Colonic mucosa (tissue), 4 donors: ENCODE measurements at regions of chr4 and their contacts with region 1.

Region 1: DNA sequence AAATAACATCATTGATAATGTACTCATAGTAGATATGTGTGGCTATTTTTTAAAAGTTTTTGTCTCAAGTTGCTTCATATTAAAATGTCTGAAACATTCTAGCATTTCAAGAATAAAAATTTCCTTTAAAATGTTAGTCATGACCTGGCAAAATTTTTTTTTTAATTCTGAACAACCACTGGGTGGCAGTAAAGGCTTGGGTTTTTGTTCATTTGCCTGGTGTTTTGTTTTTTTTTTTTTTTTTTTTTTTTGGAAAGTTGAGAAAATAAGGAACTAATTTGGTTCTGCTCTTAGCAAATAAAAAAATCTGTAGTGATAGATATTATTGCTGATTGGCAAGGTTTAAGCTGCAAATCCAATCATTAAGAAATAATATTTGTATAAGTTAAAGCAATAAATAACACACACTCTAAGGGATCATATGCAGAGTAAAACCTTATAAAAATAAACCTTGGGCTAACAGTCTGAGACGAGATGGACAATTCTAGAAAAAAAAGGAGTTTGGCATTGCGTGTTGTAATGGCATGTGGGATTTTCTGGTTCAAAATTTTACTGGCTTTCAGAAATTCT is 81.4 kb downstream of the CEP44 start:
- DNase-seq: no peak
- H3K4me3 ChIP-seq: no peak overlapping the region
- H3K27ac ChIP-seq: no peak overlapping the region
- H3K4me1 ChIP-seq: no peaks in the 10 kb centered on the region
- H3K27me3 ChIP-seq: no peaks in the 10 kb centered on the region
- CTCF ChIP-seq: no peak

Region 2: DNA sequence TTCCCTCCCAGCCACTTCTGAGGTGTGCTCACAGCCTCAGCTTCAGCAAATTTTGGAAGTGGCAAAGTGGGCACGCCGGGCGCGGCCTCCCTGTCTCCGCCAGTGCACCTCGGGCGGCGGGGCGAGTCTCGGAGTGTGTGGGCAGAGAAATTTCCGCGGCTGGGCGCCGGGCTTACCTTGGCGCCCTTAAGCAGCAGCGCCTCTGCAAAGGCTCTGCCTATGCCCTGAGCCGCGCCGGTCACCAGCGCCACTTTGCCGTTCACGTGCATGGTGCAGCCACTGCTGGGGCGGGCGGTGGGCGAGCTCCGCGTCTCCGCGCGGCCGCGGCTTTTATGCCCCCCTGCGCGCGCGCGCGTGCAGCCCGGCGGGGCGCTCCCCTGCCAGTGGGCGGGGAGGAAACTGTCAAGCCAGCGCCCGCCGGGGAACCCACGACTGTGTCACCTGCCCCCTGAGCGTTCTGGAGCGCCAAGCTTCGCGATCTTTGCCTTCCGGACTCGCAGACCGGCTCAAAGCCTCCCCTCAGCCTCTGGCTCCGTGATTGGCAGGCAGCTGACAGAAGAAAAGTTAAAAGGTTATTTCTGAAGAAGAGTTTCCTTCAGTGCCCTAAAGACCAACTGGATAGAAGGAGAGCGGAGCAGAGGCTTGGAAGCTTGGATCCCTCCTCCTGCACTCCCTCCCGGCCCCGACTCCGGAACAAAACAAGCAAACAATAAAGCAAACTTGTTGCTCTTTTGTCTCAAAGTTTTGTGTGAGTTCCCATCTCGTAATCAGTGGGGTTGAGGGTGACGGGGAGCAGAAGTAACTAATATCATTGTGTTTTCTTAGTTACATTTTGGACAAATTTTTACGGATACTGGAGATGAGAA is 157.3 kb after region 1 on chr4 and contains the start of gene HPGD:
- intact Hi-C with region 1: loop called (anchors 10 kb)
- DNase-seq: peak; percentile 78
- H3K4me3 ChIP-seq: peak within 1 kb of the TSS; percentile 73
- H3K27ac ChIP-seq: peak within 1 kb of the TSS; percentile 88
- H3K4me1 ChIP-seq: no peaks in the 10 kb centered on the region
- H3K27me3 ChIP-seq: no peaks in the 10 kb centered on the region
- CTCF ChIP-seq: no peak
- total RNA-seq, gene HPGD: 62.3 to 159 TPM

Region 3: DNA sequence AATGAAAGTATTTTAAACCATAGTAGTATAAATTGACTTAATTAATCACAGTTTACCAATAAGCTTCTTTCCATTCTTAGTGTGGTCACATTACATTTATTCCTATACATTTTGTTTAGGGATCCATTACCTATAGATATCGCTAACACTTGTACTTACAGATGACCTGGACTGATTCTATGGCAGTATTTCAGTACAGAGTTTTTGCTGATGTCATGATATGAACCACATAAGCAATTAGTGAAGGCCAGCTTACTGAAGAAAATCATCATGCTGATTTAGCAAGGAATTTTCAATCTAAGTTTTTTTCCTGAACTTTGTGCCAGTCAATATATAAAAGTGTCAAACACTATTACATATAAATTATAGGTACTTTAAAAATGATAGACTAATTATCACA is 270.6 kb after region 1 on chr4:
- intact Hi-C with region 1: loop called (anchors 2 kb)
- DNase-seq: no peak
- H3K4me3 ChIP-seq: no peak overlapping the region
- H3K27ac ChIP-seq: no peak overlapping the region
- H3K4me1 ChIP-seq: no peaks in the 10 kb centered on the region
- H3K27me3 ChIP-seq: no peaks in the 10 kb centered on the region
- CTCF ChIP-seq: no peak

Region 4: DNA sequence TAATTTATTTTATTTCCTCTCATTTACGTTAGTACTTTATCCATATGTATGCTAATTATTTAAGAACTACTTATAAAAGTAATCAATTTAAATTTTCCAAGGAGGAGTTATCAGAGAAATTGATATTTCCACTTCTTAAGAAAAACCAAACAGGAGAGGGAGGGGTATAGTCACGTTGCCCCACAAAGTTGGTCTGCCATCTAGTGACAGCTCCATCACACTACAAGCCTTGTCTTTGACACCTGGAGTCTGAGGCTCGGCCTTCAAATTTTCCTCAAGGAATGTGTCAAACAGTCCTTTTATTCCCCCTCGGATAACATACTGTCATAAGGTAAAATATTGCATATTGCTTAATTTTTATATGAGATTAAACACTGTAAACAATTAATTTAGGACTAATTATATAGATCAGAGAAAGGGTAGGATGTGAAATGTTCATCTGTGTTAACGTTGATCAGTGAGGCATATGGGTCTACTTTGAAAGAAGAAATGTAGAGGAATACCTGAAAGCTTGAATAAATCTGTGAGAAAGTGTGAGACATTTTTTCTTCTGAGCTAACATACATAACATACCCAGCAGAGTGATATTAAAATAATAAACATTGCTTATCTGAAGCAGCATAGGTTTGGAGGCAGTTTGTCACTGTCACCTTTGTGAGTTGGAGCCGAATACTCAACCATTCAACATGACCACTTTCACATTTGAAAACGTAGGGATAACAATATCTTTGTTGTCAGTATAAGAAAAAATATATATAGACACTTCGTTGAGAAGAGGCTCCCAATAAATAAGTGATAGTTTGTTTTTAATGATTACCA is 349.5 kb after region 1 on chr4:
- intact Hi-C with region 1: loop called (anchors 5 kb)
- DNase-seq: peak; percentile 25
- H3K4me3 ChIP-seq: no peak overlapping the region
- H3K27ac ChIP-seq: no peak overlapping the region
- H3K4me1 ChIP-seq: no peaks in the 10 kb centered on the region
- H3K27me3 ChIP-seq: no peaks in the 10 kb centered on the region
- CTCF ChIP-seq: peak; percentile 61